ENCODE measurements at regions of chr12 and their contacts with region 1.

Region 1: DNA sequence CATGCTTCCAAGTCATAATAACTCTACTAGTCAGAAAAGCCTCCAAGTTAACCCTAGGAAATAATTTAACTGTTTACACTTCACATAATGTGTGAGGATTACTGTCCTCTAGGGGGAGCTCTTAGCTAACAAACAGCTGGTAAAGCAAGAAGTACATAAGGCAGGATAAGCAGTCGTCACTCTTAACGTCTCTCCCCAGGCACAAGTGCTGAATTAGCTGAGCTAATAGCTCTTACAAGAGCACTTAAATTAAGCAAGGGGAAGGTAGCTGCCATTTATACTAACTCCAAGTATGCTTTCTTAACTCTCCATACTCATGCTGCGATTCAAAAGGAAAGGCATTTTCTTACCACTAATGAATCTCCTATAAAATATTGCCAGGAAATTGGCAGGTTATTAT is 79.3 kb upstream of the TSPAN11 start:
- DNase-seq: no peak
- ATAC-seq: peak in 1 of 8 donors; percentile 32
- H3K4me3 ChIP-seq: no peak overlapping the region
- H3K27ac ChIP-seq: no peak overlapping the region
- H3K4me1 ChIP-seq: peaks cover 0 to 9% (median 0%) of the 10 kb centered on the region in 9 donors
- H3K27me3 ChIP-seq: peaks cover 0 to 5% (median 0%) of the 10 kb centered on the region in 7 donors
- CTCF ChIP-seq: peak; percentile 47 to 78 (median 71)

Region 2: GRCh38 chr12:30643366-30643765 is 203.9 kb before region 1 on chr12:
- intact Hi-C with region 1: no loop called
- DNase-seq: no peak
- ATAC-seq: no peak
- H3K4me3 ChIP-seq: no peak overlapping the region
- H3K27ac ChIP-seq: no peak overlapping the region
- H3K4me1 ChIP-seq: no peaks in the 10 kb centered on the region
- H3K27me3 ChIP-seq: no peaks in the 10 kb centered on the region
- CTCF ChIP-seq: no peak

Region 3: GRCh38 chr12:30985814-30986452 is 138.7 kb after region 1 on chr12:
- intact Hi-C with region 1: loop called (anchors 2 to 5 kb)
- DNase-seq: peak; percentile 53 to 61
- ATAC-seq: peak; percentile 49 to 75 (median 68)
- H3K4me3 ChIP-seq: no peak overlapping the region
- H3K27ac ChIP-seq: no peak overlapping the region
- H3K4me1 ChIP-seq: peaks cover 0 to 23% (median 0%) of the 10 kb centered on the region in 9 donors
- H3K27me3 ChIP-seq: no peaks in the 10 kb centered on the region
- CTCF ChIP-seq: peak; percentile 22 to 79 (median 72)

Region 4: GRCh38 chr12:31057671-31058070 is 210.4 kb after region 1 on chr12:
- intact Hi-C with region 1: loop called in 3 of 10 experiments (anchors 5 to 10 kb)
- DNase-seq: no peak
- ATAC-seq: no peak
- H3K4me3 ChIP-seq: no peak overlapping the region
- H3K27ac ChIP-seq: no peak overlapping the region
- H3K4me1 ChIP-seq: no peaks in the 10 kb centered on the region
- H3K27me3 ChIP-seq: no peaks in the 10 kb centered on the region
- CTCF ChIP-seq: no peak

Region 5: DNA sequence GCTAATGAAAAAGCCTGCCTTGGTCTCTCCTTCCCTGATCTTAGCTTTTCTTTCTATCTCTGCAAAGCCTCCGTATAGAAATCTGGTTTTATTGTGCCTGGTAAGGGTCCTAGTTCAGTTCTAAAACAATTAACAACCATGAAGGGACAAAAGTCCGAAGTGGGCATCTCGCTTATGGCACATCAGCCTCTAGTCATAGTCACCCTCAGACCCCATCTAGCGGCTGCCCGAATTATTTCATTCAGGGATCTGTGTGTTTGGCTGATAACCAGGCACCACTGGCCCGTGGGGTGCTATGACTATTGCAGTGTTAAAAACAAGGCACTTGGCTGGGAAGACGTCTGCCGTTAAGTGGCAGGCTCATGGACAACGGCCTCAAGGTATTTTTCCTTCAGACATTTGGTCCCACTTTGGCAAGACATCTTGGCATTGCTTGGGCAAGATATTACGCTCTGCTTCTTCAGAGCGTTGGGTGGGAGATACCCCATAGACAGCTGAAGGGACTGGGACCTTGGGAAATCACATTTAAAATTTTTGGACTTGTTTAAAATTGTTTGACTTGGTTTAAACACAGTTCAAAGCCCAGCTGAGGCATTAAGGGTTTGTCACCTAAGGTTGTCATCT is 391.6 kb after region 1 on chr12:
- intact Hi-C with region 1: loop called in 5 of 10 experiments (anchors 5 to 10 kb)
- DNase-seq: peak; percentile 32 to 36
- ATAC-seq: peak in 7 of 8 donors; percentile 56 to 79 (median 65)
- H3K4me3 ChIP-seq: no peak overlapping the region
- H3K27ac ChIP-seq: no peak overlapping the region
- H3K4me1 ChIP-seq: peaks cover 0 to 6% (median 0%) of the 10 kb centered on the region in 9 donors
- H3K27me3 ChIP-seq: peaks cover 0 to 51% (median 34%) of the 10 kb centered on the region in 7 donors
- CTCF ChIP-seq: peak; percentile 42 to 74 (median 69)

Region 6: GRCh38 chr12:31245822-31246469 is 398.7 kb after region 1 on chr12:
- intact Hi-C with region 1: loop called in 1 of 10 experiments (anchors 10 kb)
- DNase-seq: no peak
- ATAC-seq: peak in 2 of 8 donors; percentile 30 to 38
- H3K4me3 ChIP-seq: no peak overlapping the region
- H3K27ac ChIP-seq: no peak overlapping the region
- H3K4me1 ChIP-seq: no peaks in the 10 kb centered on the region
- H3K27me3 ChIP-seq: peaks cover 0 to 15% (median 0%) of the 10 kb centered on the region in 7 donors
- CTCF ChIP-seq: no peak

Region 7: DNA sequence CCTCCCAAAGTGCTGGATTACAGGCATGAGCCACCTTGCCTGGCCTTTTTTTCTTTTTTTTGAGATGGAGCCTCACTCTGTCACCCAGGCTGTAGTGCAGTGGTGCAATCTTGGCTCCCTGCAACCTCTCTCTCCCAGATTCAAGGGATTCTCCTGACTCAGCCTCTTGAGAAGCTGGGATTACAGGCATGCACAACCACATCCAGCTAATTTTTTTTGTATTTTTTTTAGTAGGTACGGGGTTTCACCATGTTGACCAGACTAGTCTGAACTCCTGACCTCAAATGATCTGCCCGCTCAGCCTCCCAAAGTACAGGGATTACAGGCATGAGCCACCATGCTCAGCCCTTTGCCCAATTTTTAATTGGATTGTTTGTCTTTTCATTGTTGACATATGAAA is 420.7 kb after region 1 on chr12:
- intact Hi-C with region 1: loop called in 8 of 10 experiments (anchors 2 to 10 kb)
- DNase-seq: no peak
- ATAC-seq: no peak
- H3K4me3 ChIP-seq: no peak overlapping the region
- H3K27ac ChIP-seq: no peak overlapping the region
- H3K4me1 ChIP-seq: no peaks in the 10 kb centered on the region
- H3K27me3 ChIP-seq: peaks cover 0 to 7% (median 0%) of the 10 kb centered on the region in 7 donors
- CTCF ChIP-seq: no peak

Region 8: GRCh38 chr12:31274520-31275300 is 427.5 kb after region 1 on chr12:
- intact Hi-C with region 1: loop called in 8 of 10 experiments (anchors 2 to 10 kb)
- DNase-seq: no peak
- ATAC-seq: no peak
- H3K4me3 ChIP-seq: no peak overlapping the region
- H3K27ac ChIP-seq: no peak overlapping the region
- H3K4me1 ChIP-seq: no peaks in the 10 kb centered on the region
- H3K27me3 ChIP-seq: no peaks in the 10 kb centered on the region
- CTCF ChIP-seq: no peak